Astrocyte of the spinal cord (primary cell): ENCODE measurements at regions of chr9 and their contacts with region 1.

Region 1: DNA sequence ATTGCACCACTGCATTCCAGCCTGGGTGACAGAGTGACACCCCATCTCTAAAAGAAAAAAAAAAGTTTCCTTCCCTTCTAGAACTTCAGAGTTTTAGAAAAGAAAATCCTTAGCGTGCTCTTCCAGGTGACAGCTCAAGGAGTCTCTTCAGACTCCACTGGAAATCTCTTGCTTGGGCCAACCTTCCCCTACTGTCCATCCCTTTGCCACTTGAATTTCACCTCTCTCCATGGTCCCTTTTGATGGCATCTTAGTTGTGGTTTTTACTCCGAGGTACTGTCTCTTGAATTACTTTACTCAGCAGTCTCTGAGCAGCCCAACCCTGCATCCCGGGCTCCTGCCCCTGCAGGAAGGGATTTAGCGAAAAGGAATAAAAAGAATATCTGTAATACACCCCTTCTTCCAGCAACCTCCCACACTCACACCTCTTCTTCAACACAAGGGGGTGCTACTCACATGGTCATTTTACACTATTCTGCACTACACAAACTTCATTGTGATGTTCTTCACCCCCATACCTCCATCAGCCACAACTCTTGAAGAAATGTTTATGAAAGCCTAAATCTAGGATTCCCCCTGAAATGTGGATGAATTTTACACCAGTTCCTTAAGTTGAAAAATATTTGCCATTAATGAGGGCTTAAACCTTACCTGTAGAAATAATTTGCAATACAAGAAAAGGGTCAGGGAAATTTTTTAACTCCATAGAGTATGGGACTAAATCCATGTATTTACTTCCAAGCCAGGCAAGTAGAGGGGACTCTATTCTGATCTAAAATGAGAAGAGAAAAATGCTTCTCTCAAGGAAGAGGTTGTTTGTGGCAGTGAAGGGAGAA is 25.9 kb downstream of the TPD52L3 start:
- DNase-seq: peak; percentile 78
- H3K4me3 ChIP-seq: no peak overlapping the region
- CTCF ChIP-seq: peak; percentile 75

Region 2: DNA sequence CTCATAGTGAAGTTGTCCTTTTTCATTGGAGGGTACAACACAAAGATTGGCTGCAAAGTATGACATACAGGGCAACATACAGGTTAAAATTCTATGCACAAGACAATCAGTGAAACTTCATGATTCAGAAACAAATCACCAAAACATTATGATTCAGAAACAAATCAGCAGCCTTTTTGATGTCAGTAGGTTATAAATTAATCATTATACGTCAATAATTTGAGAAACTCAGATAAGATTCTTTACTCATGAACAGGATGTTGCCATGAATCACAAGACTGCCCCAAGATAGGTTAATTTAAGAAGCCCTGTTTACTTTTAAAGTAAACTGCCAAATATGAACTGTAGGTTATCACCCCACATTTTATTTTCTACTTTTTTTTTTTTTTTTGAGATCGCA is 200.6 kb before region 1 on chr9:
- in situ Hi-C with region 1: no loop called
- DNase-seq: no peak
- H3K4me3 ChIP-seq: no peak overlapping the region
- CTCF ChIP-seq: no peak

Region 3: GRCh38 chr9:6584881-6585597 is 231.0 kb after region 1 on chr9:
- in situ Hi-C with region 1: loop called (anchors 25 kb)
- DNase-seq: peak; percentile 59
- H3K4me3 ChIP-seq: no peak overlapping the region
- CTCF ChIP-seq: peak; percentile 36